Left ventricle myocardium superior (tissue), 1 donor: ENCODE measurements at regions of chr1 and their contacts with region 1.

Region 1: DNA sequence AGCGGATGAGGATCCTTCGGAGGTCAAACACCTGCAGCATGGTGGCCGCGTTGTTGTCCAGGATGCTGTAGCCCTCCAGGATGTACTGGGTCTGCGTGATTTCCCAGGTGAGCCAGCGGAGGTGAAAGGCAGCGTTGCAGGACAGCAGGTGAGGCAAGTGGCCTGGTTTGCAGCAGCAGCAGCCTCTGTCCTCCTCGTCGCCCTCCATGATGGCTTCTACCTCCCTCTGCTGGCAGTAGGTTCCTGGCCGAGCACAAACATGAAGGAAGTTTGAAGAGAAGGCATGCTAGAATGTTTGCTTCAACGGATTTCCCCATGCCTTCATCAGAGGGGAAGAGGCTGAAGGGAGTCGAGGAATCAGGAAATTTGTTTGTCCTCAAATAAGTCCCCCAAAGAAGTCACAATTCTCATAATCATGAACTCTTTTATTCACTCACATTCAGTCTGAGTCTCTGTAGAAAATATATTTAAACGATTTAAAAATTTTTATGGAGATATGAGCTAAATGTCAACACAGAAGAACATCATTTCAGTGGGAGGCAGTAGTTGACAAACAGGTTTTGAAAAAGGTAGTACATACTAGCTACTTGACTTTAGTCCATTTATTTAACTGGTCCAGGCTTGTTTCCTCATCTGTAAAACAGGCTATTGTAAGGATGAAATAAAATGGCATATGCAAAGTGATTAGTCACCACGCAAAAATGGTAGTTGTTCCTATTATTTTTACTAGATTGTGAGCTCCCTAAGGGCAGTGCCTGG is 74.9 kb downstream of the NTPCR start:
- DNase-seq: peak; percentile 52
- ATAC-seq: peak; percentile 66

Region 2: DNA sequence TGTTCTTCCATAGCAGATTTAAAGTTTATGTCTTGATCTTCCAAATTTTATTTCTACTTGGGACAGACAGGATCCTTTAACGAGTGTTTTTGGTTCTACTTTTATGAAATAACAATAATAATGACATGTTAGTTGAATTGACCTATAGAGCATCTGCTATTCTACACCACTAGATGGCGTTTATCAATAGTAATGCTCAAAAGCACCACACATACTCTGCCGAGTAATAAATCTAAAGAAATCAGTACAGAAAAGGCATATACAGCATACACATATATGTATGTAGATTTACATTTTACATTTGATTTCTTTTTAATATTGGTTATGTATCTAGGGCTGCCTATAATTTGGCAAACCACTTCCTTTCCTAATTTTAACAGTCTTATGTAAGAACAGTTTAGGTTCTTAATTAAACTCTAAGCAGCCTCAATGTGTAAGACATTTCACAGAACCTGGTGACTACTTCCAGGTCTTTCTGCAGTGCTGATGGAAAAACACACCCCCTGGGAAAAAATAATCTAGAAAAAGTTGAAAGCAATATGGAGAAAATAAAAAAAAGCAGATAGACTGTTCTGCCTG is 389.5 kb before region 1 on chr1:
- intact Hi-C with region 1: loop called (anchors 5 kb)
- DNase-seq: no peak
- ATAC-seq: peak; percentile 63